Ovary (tissue), 10 donors: ENCODE measurements at regions of chr19 and their contacts with region 1.

Region 1: GRCh38 chr19:1266116-1266915 is 2.8 kb upstream of the CIRBP start:
- DNase-seq: peak; percentile 85 to 90 (median 87)
- H3K4me3 ChIP-seq: peak overlapping the region; percentile 49
- H3K27ac ChIP-seq: peak overlapping the region; percentile 86 to 93
- H3K4me1 ChIP-seq: peaks cover 36% of the 10 kb centered on the region
- H3K27me3 ChIP-seq: no peaks in the 10 kb centered on the region
- CTCF ChIP-seq: no peak
- EP300 ChIP-seq: no peak
- POLR2A ChIP-seq: no peak

Region 2: GRCh38 chr19:1183534-1184172 is 82.7 kb before region 1 on chr19:
- intact Hi-C with region 1: no loop called
- DNase-seq: peak in 2 of 5 donors; percentile 19 to 35
- H3K4me3 ChIP-seq: no peak overlapping the region
- H3K27ac ChIP-seq: no peak overlapping the region
- H3K4me1 ChIP-seq: no peaks in the 10 kb centered on the region
- H3K27me3 ChIP-seq: no peaks in the 10 kb centered on the region
- CTCF ChIP-seq: no peak
- EP300 ChIP-seq: no peak
- POLR2A ChIP-seq: no peak

Region 3: DNA sequence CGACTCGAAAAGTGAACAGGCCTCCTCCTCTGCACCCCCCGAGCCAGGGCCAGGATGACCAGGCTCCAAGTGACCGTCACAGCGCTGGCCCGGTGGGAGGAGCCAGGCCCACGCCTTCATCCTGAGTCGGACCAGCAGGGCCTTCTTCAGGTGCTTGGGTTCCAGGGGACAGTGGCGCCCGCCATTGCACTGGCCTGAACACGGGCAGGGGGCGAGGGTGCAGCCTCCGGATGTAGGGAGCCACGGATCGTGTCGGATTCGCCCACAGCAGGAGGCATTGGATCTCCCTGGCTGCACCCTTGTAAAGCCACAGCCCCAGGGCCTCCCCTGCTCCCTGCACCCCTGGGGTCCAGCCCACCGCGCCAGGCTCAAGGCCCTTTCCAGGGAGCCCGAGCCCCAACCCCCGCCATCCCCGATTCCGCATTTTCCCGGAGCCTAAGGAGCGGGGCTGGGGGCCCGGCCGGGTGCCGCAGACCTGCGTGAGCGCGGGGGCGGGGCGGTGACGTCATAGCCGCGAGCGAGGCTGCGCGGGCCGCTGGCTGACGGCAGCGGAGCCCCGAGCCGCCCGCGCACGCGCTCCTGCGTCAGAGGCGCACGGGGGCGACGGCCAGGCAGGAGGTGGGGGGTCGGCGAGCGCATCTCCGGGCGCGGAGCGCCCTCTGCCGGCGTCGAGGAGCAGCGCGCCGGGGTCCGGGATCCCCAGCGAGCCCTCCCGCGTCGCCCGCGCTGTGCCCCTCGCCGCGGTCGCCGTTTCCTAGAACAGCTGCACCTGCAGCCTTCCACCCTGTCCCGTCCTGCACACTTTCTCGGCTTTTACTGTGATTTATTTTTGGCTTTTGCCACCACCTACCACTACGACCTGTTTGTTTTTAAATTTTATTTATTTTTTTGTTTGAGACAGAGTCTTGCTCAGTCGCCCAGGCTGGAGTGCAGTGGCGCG is 26.2 kb before region 1 on chr19:
- intact Hi-C with region 1: loop called (anchors 1 to 2 kb)
- DNase-seq: peak; percentile 91 to 97 (median 96)
- H3K4me3 ChIP-seq: peak overlapping the region; percentile 21
- H3K27ac ChIP-seq: peak overlapping the region; percentile 81 to 89
- H3K4me1 ChIP-seq: peaks cover 22% of the 10 kb centered on the region
- H3K27me3 ChIP-seq: peaks cover 4% of the 10 kb centered on the region
- CTCF ChIP-seq: peak; percentile 94 to 99 (median 97)
- EP300 ChIP-seq: no peak
- POLR2A ChIP-seq: no peak